Caco-2 (cell line): ENCODE measurements at regions of chr3 and their contacts with region 1.

Region 1: DNA sequence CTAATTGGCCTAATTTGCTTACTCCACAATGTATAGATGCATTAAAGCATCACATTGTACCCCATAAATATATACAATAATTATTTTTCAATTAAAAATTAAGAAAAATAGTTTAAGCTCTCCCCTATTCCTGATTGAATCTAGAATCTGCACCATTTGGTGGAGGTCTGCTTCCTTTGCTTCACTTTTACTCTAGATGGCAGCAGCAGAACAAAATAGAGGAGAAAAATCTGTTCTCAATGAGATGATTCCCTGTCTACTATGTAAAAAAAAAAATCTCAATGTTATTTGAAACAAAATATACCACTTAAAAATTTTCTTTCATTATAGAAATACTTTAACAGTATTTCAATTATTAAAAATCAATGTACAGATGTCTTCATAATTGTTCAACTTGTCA is 109.6 kb upstream of the FXR1 start:
- DNase-seq: peak in 1 of 2 experiments; percentile 11
- H3K4me3 ChIP-seq: no peak overlapping the region
- H3K4me3 Mint-ChIP-seq: no peak overlapping the region
- H3K27ac Mint-ChIP-seq: no peak overlapping the region
- H3K4me1 ChIP-seq: no peaks in the 10 kb centered on the region
- H3K4me1 Mint-ChIP-seq: no peaks in the 10 kb centered on the region
- H3K27me3 ChIP-seq: no peaks in the 10 kb centered on the region
- H3K27me3 Mint-ChIP-seq: no peaks in the 10 kb centered on the region
- CTCF ChIP-seq: peak; percentile 46 to 54

Region 2: GRCh38 chr3:180855364-180855763 is 52.5 kb after region 1 on chr3:
- CTCF ChIA-PET with region 1: no interaction called
- POLR2A ChIA-PET with region 1: no interaction called
- intact Hi-C with region 1: loop called (anchors 2 kb)
- DNase-seq: no peak
- H3K4me3 ChIP-seq: no peak overlapping the region
- H3K4me3 Mint-ChIP-seq: no peak overlapping the region
- H3K27ac Mint-ChIP-seq: no peak overlapping the region
- H3K4me1 ChIP-seq: no peaks in the 10 kb centered on the region
- H3K4me1 Mint-ChIP-seq: no peaks in the 10 kb centered on the region
- H3K27me3 ChIP-seq: no peaks in the 10 kb centered on the region; the same call in 1 of the 2 replicates
- H3K27me3 Mint-ChIP-seq: peaks cover 11% of the 10 kb centered on the region
- CTCF ChIP-seq: peak; percentile 22 to 25

Region 3: GRCh38 chr3:180989291-180990163 is 186.7 kb after region 1 on chr3 and contains the start of gene DNAJC19:
- CTCF ChIA-PET with region 1: no interaction called
- POLR2A ChIA-PET with region 1: no interaction called
- intact Hi-C with region 1: loop called (anchors 10 kb)
- DNase-seq: peak; percentile 93 to 96
- H3K4me3 ChIP-seq: peak within 1 kb of the TSS; percentile 68
- H3K4me3 Mint-ChIP-seq: peak within 1 kb of the TSS; percentile 100
- H3K27ac Mint-ChIP-seq: peak within 1 kb of the TSS; percentile 99
- H3K4me1 ChIP-seq: no peaks in the 10 kb centered on the region
- H3K4me1 Mint-ChIP-seq: no peaks in the 10 kb centered on the region
- H3K27me3 ChIP-seq: no peaks in the 10 kb centered on the region
- H3K27me3 Mint-ChIP-seq: peaks cover 7% of the 10 kb centered on the region
- CTCF ChIP-seq: no peak
- total RNA-seq, gene DNAJC19: 55.4 and 71.8 TPM in 2 replicates

Region 4: GRCh38 chr3:181075098-181075497 is 272.3 kb after region 1 on chr3:
- CTCF ChIA-PET with region 1: no interaction called
- POLR2A ChIA-PET with region 1: no interaction called
- intact Hi-C with region 1: loop called (anchors 10 kb)
- DNase-seq: no peak
- H3K4me3 ChIP-seq: no peak overlapping the region
- H3K4me3 Mint-ChIP-seq: no peak overlapping the region
- H3K27ac Mint-ChIP-seq: no peak overlapping the region
- H3K4me1 ChIP-seq: no peaks in the 10 kb centered on the region
- H3K4me1 Mint-ChIP-seq: no peaks in the 10 kb centered on the region
- H3K27me3 ChIP-seq: no peaks in the 10 kb centered on the region
- H3K27me3 Mint-ChIP-seq: peaks cover 9% of the 10 kb centered on the region
- CTCF ChIP-seq: no peak

Region 5: DNA sequence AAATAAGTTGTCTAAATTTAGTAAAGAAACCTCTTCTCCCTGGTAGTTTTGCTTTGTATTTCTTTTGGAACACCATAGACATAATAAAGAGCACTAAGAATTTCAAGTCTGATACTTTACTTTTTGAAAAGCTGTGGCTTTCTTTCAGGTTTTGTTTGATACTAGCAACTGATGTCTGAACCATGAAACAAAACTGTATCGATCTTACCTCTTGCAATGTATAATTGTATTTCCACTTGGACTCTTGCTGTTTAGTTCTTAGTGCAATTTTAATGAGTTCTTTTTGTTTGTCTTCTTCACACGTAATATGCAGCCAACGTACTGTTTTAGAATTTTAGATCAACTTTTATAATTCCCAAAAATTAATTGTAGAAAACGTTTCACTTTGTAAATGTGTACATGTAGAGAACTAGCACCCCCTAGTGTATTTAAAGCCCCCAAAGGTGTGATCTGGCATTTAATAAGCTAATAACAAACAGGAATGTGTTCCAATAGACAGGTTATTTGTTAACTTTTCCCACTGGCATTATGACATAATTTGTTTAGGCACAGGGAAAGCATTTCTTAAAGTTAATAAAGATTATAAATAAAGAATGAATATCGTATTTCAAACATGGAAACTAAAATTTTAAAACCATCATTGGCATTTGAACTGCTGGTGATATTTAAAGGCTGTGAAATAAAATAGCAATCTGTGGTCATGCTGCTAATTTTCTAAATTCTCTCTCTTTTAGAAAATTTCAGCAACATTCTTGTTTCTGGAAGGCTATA is 475.8 kb after region 1 on chr3:
- CTCF ChIA-PET with region 1: no interaction called
- POLR2A ChIA-PET with region 1: no interaction called
- intact Hi-C with region 1: loop called (anchors 5 kb)
- DNase-seq: no peak
- H3K4me3 ChIP-seq: no peak overlapping the region
- H3K4me3 Mint-ChIP-seq: no peak overlapping the region
- H3K27ac Mint-ChIP-seq: no peak overlapping the region
- H3K4me1 ChIP-seq: no peaks in the 10 kb centered on the region
- H3K4me1 Mint-ChIP-seq: no peaks in the 10 kb centered on the region
- H3K27me3 ChIP-seq: no peaks in the 10 kb centered on the region; the same call in 1 of the 2 replicates
- H3K27me3 Mint-ChIP-seq: peaks cover 15% of the 10 kb centered on the region
- CTCF ChIP-seq: peak in 1 of 2 experiments; percentile 14

Region 6: DNA sequence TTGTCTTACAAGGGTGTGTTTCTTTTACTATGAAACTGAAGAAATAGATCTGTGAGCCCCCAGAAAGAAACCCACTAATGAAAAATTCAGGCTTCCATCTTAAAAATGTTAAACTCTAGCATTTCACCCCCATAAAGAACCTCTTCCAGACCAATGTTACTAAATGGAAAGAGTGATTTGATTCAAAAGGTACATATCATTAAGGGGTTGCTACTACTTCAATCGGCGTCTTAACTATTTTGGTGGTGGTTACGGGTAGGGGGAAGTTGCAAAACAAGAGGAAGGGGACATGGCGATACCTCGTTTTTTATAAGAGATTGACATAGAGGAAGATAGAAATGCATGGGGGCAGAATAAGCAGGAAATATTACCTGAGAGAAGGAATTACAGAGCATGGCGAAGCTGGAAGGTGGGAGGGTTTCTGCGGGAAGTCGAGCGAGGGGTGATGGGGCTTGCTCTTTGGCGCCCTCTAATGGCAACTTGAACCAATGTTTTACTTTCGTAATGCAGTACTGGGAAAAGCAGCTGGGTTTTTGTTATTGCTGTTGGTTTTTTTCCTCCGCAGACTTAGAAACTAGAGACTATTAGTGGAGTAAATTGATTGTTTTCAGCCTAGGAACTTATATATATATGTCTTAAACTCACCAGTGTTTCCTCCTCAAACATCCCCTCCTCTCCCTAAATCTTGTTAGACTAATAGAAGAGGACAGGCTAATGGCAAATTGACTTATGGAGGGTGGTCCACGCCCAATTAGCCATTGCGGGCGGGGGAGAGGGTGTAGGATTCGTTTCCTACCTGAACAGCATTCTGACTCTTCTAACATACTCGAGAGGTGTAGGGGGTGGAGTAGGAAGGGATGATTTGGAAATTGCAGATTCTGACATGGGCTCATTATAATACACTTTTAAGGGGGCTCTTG is 897.6 kb after region 1 on chr3:
- CTCF ChIA-PET with region 1: no interaction called
- POLR2A ChIA-PET with region 1: no interaction called
- intact Hi-C with region 1: loop called (anchors 5 kb)
- DNase-seq: peak; percentile 63 to 79
- H3K4me3 ChIP-seq: no peak overlapping the region
- H3K4me3 Mint-ChIP-seq: peak overlapping the region; percentile 73
- H3K27ac Mint-ChIP-seq: no peak overlapping the region
- H3K4me1 ChIP-seq: no peaks in the 10 kb centered on the region
- H3K4me1 Mint-ChIP-seq: peaks cover 10% of the 10 kb centered on the region
- H3K27me3 ChIP-seq: no peaks in the 10 kb centered on the region
- H3K27me3 Mint-ChIP-seq: peaks cover 18% of the 10 kb centered on the region
- CTCF ChIP-seq: peak; percentile 71 to 84